Activated T-helper 2 cell treated with anti-CD3 and anti-CD28 coated beads, Interferon-gamma antibody, Interleukin-2, Interleukin-4, amounts not matched to agents 10 μg/mL and 5 μg/mL and 100 μg/mL, durations not matched to agents 14 hours and 24 hours and 36 hours (primary cell): ENCODE measurements at regions of chr10 and their contacts with region 1.

Region 1: DNA sequence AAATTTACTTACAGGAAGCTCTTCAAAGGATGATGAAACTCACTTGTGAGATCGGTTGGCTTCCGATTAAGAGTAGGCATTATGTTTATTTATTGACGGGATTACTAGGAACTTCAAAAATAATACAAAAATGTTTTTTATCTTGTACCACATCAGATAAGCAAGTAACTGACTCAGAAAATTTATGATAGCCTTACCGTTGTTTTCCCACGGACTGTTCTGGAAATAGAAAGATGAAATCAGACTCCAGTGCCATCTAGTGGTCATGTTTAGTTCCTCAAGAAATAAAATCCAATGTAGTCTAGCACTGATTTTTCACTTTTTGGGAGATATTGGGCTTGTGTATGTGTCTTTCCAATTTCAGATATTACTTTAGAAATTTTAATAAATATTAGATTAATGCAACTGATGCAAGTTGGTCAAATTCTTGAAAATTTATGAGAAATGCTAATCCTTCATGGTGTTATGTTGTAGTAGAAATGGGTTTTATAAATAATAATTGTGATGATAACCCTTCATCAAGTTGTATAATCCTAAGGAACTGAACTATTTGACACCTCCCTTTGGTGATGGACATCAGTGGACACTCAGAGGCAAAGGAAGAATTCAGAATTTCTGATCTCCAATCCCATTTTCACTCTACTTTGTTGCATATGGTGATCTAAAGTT is 168.8 kb downstream of the TMEM26 start:
- DNase-seq: no peak
- H3K4me3 Mint-ChIP-seq: no peak overlapping the region
- H3K27ac Mint-ChIP-seq: no peak overlapping the region
- H3K4me1 Mint-ChIP-seq: peaks cover 44% of the 10 kb centered on the region
- H3K27me3 Mint-ChIP-seq: peaks cover 12% of the 10 kb centered on the region

Region 2: DNA sequence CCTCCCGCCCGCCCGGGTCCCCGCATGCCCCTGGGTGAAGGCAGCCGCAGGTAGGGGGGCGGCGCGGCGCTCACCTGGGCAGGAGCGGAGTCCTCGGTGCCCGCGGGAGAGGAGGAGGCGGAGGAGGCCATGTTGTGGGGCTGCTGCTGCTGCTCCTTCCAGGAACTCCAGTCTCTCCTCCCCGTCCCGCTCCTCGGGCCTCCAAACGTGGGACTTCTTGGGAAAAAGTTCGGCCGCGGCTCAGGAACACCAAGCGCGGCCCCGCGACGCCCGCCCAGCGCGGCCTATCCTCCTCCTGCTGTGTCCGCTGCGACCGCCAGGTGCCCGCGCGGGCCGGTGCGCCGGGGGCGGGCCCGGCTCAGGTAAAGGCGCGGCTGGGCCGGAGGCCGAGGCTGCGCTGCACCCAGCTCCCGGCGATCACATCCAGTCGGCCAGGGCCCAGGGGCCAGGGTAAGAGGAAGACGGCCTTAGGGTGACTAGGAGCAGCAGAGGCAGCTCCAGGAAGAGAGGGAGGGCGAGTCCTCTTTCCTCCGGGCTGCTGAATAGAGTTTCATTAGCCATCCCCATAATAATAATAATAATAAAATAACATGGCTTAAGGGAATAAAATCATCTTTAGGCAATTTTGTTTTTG is 551.0 kb before region 1 on chr10:
- intact Hi-C with region 1: loop called (anchors 1 kb)
- DNase-seq: peak; percentile 28
- H3K4me3 Mint-ChIP-seq: no peak overlapping the region
- H3K27ac Mint-ChIP-seq: no peak overlapping the region
- H3K4me1 Mint-ChIP-seq: peaks cover 31% of the 10 kb centered on the region
- H3K27me3 Mint-ChIP-seq: peaks cover 4% of the 10 kb centered on the region

Region 3: DNA sequence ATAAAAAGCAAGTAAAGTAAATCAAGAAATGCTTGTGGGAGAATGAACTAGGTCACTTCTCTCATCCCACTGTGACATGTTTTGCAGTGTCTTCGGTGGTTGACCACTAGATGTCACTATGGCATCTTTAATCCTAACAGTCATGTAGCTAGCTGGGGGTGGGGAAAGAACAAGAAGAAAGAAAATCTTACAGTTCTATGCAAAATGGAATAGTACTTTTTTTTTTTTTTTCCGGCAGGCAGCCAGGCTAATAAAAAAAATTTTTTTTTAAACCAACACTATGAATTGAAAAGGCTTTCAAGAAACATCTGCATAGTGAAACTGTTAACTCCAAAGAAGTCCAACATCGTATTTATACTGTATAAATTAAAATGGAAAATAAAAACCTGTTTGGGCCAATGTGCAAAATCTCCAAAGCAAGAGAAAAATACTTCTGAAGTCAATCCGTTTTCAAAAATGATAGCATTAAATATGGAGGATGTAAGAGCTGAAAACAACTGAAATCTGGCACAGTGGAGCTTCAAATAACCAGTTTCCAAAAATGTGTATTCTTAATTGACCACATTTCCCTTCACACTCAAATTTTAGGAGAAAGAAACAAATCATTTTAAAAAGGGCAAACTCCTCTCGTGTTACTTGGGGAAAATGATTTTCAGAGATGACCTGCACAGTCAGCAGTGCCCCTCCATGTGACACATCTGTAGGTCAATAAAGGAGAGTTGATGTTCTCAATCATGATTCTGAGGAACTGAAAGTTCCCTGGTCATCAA is 467.5 kb before region 1 on chr10:
- intact Hi-C with region 1: loop called (anchors 1 kb)
- DNase-seq: no peak
- H3K4me3 Mint-ChIP-seq: no peak overlapping the region
- H3K27ac Mint-ChIP-seq: no peak overlapping the region
- H3K4me1 Mint-ChIP-seq: peaks cover 13% of the 10 kb centered on the region
- H3K27me3 Mint-ChIP-seq: peaks cover 26% of the 10 kb centered on the region

Region 4: DNA sequence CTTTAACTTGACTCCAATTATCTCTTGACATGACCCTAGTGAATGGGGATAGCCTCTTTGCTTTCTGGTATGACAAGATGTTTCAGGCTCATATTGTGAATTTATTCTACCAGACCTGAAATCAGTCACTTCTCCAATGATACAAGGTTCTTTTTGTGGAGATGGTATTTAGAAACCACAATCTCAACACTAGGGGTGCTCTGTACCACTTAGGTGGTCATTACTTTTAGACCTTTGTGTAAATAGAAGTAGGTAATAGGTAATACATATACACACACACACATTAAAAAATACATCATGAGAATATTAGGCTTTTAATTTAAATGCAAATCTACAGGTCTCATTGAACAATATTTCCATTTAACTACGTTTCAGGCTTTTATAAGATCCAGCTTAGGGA is 141.4 kb before region 1 on chr10:
- intact Hi-C with region 1: loop called (anchors 2 kb)
- DNase-seq: no peak
- H3K4me3 Mint-ChIP-seq: no peak overlapping the region
- H3K27ac Mint-ChIP-seq: no peak overlapping the region
- H3K4me1 Mint-ChIP-seq: no peaks in the 10 kb centered on the region
- H3K27me3 Mint-ChIP-seq: peaks cover 18% of the 10 kb centered on the region

Region 5: DNA sequence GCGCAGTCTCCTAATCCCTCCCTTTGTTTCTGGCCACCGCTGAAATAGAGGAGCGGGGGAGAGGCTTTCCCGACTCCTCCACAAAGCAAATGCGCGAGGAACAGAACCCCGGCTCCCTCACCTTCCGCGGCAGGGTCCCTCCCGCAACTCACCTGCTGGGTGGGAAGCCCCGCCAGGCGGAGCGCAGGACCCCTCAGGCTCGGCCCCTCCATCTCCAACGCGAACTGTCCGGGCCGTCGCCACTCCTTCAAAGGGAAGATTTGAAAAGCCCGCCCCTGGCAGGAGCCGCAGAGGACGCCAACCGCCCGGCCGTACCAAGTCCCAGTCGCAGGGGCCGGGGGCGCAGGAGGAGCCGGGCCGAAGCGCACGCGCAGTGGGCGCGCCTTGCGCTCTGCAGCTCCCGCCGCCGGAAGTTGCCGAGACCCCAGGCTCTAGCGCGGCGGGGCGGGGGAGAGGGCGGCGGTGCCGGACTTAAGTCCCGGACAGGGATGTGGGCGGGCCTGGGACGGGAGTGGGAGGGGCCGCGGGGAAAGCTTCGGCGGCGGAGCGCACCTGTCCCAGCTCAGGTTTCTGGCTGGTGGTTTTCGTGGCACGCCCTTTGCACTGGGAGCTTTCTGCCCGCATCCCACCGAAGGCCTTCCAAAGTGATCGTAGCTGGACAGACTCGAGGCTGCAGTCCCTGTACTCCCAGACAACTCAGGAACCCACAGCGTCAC is 984.2 kb after region 1 on chr10 and contains the start of gene RTKN2:
- intact Hi-C with region 1: loop called (anchors 10 kb)
- DNase-seq: peak; percentile 70
- H3K4me3 Mint-ChIP-seq: peak within 1 kb of the TSS; percentile 85
- H3K27ac Mint-ChIP-seq: no peak within 1 kb of the TSS
- H3K4me1 Mint-ChIP-seq: peaks cover 25% of the 10 kb centered on the region
- H3K27me3 Mint-ChIP-seq: peaks cover 36% of the 10 kb centered on the region
- total RNA-seq, gene RTKN2: 2.8 and 2.9 TPM in 2 replicates